A673 (cell line): ENCODE measurements at regions of chr9 and their contacts with region 1.

Region 1: GRCh38 chr9:33264473-33265177 is at the starts of genes BAG1 and CHMP5:
- DNase-seq: peak; percentile 100
- H3K4me3 ChIP-seq: peak within 1 kb of the TSS; percentile 99
- H3K27ac ChIP-seq: peak within 1 kb of the TSS; percentile 82
- H3K4me1 ChIP-seq: peaks cover 12% of the 10 kb centered on the region
- H3K27me3 ChIP-seq: no peaks in the 10 kb centered on the region
- CTCF ChIP-seq: no peak
- total RNA-seq, gene BAG1: 48.4 and 52.7 TPM in 2 replicates
- total RNA-seq, gene CHMP5: 74.4 and 74.6 TPM in 2 replicates

Region 2: DNA sequence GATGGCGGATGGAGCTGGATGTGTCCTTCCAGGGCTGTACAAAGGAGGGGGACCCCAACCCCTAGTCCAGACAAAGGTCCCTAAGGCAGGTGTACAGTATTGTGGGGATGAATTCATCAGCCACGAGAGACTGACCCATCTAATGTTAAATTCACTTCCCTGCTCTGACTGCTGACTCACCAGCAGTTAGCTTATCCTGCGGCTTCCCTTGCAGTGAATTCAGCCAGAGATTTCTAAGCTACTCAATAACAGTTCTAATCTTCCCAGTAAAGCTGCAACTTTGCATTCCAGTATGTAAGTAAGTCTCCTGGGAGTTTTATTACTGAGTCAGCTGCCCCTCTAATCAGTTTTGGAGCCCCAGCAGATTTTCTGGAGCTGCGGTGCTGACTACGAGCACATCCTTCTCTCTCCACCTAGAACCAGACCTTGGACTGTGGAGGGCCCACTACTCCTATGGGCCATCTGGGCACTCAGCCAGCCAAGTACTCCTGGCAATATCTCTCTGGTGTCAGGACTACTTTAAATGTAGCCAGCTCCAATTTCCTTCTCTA is 113.5 kb before region 1 on chr9:
- CTCF ChIA-PET with region 1: no interaction called
- POLR2A ChIA-PET with region 1: no interaction called
- intact Hi-C with region 1: no loop called
- DNase-seq: peak; percentile 93
- H3K4me3 ChIP-seq: peak overlapping the region; percentile 29
- H3K27ac ChIP-seq: peak overlapping the region; percentile 88
- H3K4me1 ChIP-seq: peaks cover 34% of the 10 kb centered on the region
- H3K27me3 ChIP-seq: no peaks in the 10 kb centered on the region
- CTCF ChIP-seq: no peak

Region 3: GRCh38 chr9:33287087-33287490 is 22.5 kb after region 1 on chr9:
- CTCF ChIA-PET with region 1: no interaction called
- POLR2A ChIA-PET with region 1: interaction called, 3 read pairs
- intact Hi-C with region 1: loop called (anchors 2 kb)
- DNase-seq: peak; percentile 82
- H3K4me3 ChIP-seq: no peak overlapping the region
- H3K27ac ChIP-seq: no peak overlapping the region
- H3K4me1 ChIP-seq: peaks cover 4% of the 10 kb centered on the region
- H3K27me3 ChIP-seq: no peaks in the 10 kb centered on the region
- CTCF ChIP-seq: peak; percentile 80

Region 4: DNA sequence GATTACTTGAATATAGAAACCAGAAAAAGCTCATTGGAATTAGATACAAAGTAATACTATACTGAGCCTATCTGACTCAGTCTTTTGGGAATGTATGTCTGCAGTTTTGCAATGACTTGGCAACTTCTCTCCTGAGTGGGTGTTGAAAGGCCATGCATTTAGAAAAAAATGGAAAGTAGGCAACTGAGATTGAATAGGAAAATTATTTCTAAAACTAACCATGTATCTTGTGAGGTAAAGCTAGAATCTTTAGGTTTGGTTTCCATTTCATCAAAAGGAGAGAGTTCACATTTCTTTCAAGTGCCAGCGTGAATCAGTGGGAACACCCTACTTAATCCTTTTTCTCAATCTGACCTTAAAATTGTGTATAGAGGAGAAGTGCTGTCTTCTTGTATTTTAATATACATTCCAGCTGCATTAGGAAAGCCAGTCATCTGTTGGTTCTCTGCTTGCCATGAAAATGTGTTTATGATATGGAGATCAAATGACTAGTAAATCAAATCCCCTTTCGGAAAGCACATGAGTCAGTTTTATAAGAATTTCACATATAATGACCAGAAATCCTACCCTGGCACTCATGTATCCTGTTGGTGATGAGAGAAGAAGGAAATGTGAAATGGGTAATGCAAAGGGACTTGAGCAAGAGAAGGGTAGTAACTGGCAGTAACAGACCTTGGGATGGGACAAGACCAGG is 56.1 kb after region 1 on chr9:
- CTCF ChIA-PET with region 1: no interaction called
- POLR2A ChIA-PET with region 1: no interaction called
- intact Hi-C with region 1: no loop called
- DNase-seq: peak; percentile 73
- H3K4me3 ChIP-seq: no peak overlapping the region
- H3K27ac ChIP-seq: peak overlapping the region; percentile 83
- H3K4me1 ChIP-seq: peaks cover 5% of the 10 kb centered on the region
- H3K27me3 ChIP-seq: no peaks in the 10 kb centered on the region
- CTCF ChIP-seq: no peak